K562 (cell line): ENCODE measurements at regions of chr1 and their contacts with region 1.

Region 1: GRCh38 chr1:152960452-152961044 is 9.9 kb upstream of the SPRR4 start:
- DNase-seq: peak; percentile 29 to 45 (median 36)
- ATAC-seq: peak; percentile 89
- H3K4me3 ChIP-seq: no peak overlapping the region
- H3K27ac ChIP-seq: no peak overlapping the region
- H3K4me1 ChIP-seq: no peaks in the 10 kb centered on the region
- H3K27me3 ChIP-seq: peaks cover 7 to 24% of the 10 kb centered on the region in 2 experiments; a peak in 4 of 5 replicates
- CTCF ChIP-seq: peak; percentile 68 to 75 (median 70)
- EP300 ChIP-seq: no peak
- POLR2A ChIP-seq: no peak
- RAD21 ChIP-seq: peak; percentile 68 to 82

Region 2: GRCh38 chr1:152946248-152946647 is 14.3 kb before region 1 on chr1:
- CTCF ChIA-PET with region 1: no interaction called
- POLR2A ChIA-PET with region 1: no interaction called
- in situ Hi-C with region 1: no loop called
- intact Hi-C with region 1: no loop called
- DNase-seq: no peak
- ATAC-seq: no peak
- H3K4me3 ChIP-seq: no peak overlapping the region
- H3K27ac ChIP-seq: no peak overlapping the region
- H3K4me1 ChIP-seq: no peaks in the 10 kb centered on the region
- H3K27me3 ChIP-seq: peaks cover 2 to 12% of the 10 kb centered on the region in 2 experiments; a peak in 2 of 5 replicates
- CTCF ChIP-seq: no peak
- EP300 ChIP-seq: no peak
- POLR2A ChIP-seq: no peak
- RAD21 ChIP-seq: no peak

Region 3: GRCh38 chr1:153032677-153033308 is 72.2 kb after region 1 on chr1:
- CTCF ChIA-PET with region 1: no interaction called
- POLR2A ChIA-PET with region 1: no interaction called
- in situ Hi-C with region 1: no loop called
- intact Hi-C with region 1: loop called (anchors 2 kb)
- DNase-seq: peak in 2 of 4 experiments; percentile 7 to 36
- ATAC-seq: peak; percentile 80
- H3K4me3 ChIP-seq: no peak overlapping the region
- H3K27ac ChIP-seq: no peak overlapping the region
- H3K4me1 ChIP-seq: no peaks in the 10 kb centered on the region
- H3K27me3 ChIP-seq: no peaks in the 10 kb centered on the region
- CTCF ChIP-seq: peak; percentile 16 to 48 (median 34); a peak in 2 of 6 replicates
- EP300 ChIP-seq: no peak
- POLR2A ChIP-seq: no peak
- RAD21 ChIP-seq: peak; percentile 48 to 62; a peak in 3 of 4 replicates

Region 4: GRCh38 chr1:153070243-153070642 is 109.7 kb after region 1 on chr1:
- CTCF ChIA-PET with region 1: no interaction called
- POLR2A ChIA-PET with region 1: no interaction called
- in situ Hi-C with region 1: no loop called
- intact Hi-C with region 1: no loop called
- DNase-seq: peak in 1 of 4 experiments; percentile 9
- ATAC-seq: peak; percentile 52; the same call in 1 of the 3 replicates
- H3K4me3 ChIP-seq: no peak overlapping the region
- H3K27ac ChIP-seq: no peak overlapping the region
- H3K4me1 ChIP-seq: peaks cover 5 to 17% of the 10 kb centered on the region in 2 experiments
- H3K27me3 ChIP-seq: no peaks in the 10 kb centered on the region
- CTCF ChIP-seq: no peak
- EP300 ChIP-seq: no peak
- POLR2A ChIP-seq: no peak
- RAD21 ChIP-seq: no peak

Region 5: GRCh38 chr1:153220606-153221303 is 260.2 kb after region 1 on chr1:
- CTCF ChIA-PET with region 1: interaction called, 3 read pairs
- POLR2A ChIA-PET with region 1: no interaction called
- in situ Hi-C with region 1: no loop called
- intact Hi-C with region 1: loop called (anchors 2 kb)
- DNase-seq: peak in 2 of 4 experiments; percentile 14 to 33
- ATAC-seq: no peak; the same call in 2 of the 3 replicates
- H3K4me3 ChIP-seq: no peak overlapping the region
- H3K27ac ChIP-seq: no peak overlapping the region
- H3K4me1 ChIP-seq: no peaks in the 10 kb centered on the region; a peak in 1 of 5 replicates
- H3K27me3 ChIP-seq: peaks cover 2 to 18% of the 10 kb centered on the region in 2 experiments; a peak in 1 of 5 replicates
- CTCF ChIP-seq: no peak
- EP300 ChIP-seq: 0 out of 2 replicates have a peak, but pooled peaks have one; percentile 11
- POLR2A ChIP-seq: no peak
- RAD21 ChIP-seq: no peak